Ascending aorta (tissue), 2 donors: ENCODE measurements at regions of chr18 and their contacts with region 1.

Region 1: GRCh38 chr18:45802608-45803492 is 22.6 kb upstream of the SIGLEC15 start:
- DNase-seq: no peak
- H3K4me3 ChIP-seq: no peak overlapping the region
- H3K27ac ChIP-seq: peak overlapping the region; percentile 45 to 57
- H3K4me1 ChIP-seq: peaks cover 0 to 4% of the 10 kb centered on the region in 2 donors
- H3K27me3 ChIP-seq: no peaks in the 10 kb centered on the region
- CTCF ChIP-seq: no peak

Region 2: DNA sequence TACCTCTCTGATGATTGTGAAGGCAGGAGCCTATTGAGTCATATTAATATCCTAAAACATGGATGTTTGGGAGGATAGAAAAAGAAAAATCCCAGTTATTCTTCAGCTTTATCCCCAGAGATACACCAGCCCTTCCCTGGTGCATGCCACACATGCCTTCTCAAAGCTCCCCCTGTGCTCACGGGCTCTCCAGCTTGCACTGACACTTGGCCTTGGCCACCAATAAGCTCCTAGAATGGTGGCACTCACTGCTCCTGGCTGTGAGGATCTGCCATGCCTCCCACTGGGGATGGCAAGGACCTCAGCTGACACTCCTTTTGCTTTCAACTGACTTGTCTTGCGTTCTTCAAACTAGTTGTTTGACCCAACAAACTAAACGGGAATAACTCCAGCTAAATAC is 63.0 kb before region 1 on chr18:
- intact Hi-C with region 1: no loop called
- DNase-seq: no peak
- H3K4me3 ChIP-seq: no peak overlapping the region
- H3K27ac ChIP-seq: no peak overlapping the region
- H3K4me1 ChIP-seq: peaks cover 0 to 7% of the 10 kb centered on the region in 2 donors
- H3K27me3 ChIP-seq: no peaks in the 10 kb centered on the region
- CTCF ChIP-seq: no peak

Region 3: GRCh38 chr18:45755934-45756333 is 46.9 kb before region 1 on chr18:
- intact Hi-C with region 1: loop called (anchors 1 kb)
- DNase-seq: peak; percentile 44 to 94
- H3K4me3 ChIP-seq: no peak overlapping the region
- H3K27ac ChIP-seq: peak overlapping the region; percentile 71 to 73
- H3K4me1 ChIP-seq: peaks cover 13 to 27% of the 10 kb centered on the region in 2 donors
- H3K27me3 ChIP-seq: no peaks in the 10 kb centered on the region
- CTCF ChIP-seq: no peak